ENCODE measurements at regions of chr4 and their contacts with region 1.

Region 1: GRCh38 chr4:118586357-118586790 is 98.8 kb upstream of the METTL14 start:
- DNase-seq: no peak
- ATAC-seq: no peak
- H3K4me3 ChIP-seq: no peak overlapping the region
- H3K4me3 Mint-ChIP-seq: no peak overlapping the region
- H3K27ac ChIP-seq: no peak overlapping the region
- H3K27ac Mint-ChIP-seq: no peak overlapping the region
- H3K4me1 ChIP-seq: peaks cover 7% of the 10 kb centered on the region
- H3K4me1 Mint-ChIP-seq: peaks cover 9% of the 10 kb centered on the region
- H3K27me3 ChIP-seq: peaks cover 0 to 4% of the 10 kb centered on the region in 2 experiments
- H3K27me3 Mint-ChIP-seq: peaks cover 24% of the 10 kb centered on the region
- CTCF ChIP-seq: no peak

Region 2: GRCh38 chr4:118296729-118297128 is 289.6 kb before region 1 on chr4:
- CTCF ChIA-PET with region 1: no interaction called
- POLR2A ChIA-PET with region 1: no interaction called
- intact Hi-C with region 1: no loop called
- DNase-seq: no peak
- ATAC-seq: no peak
- H3K4me3 ChIP-seq: no peak overlapping the region
- H3K4me3 Mint-ChIP-seq: no peak overlapping the region
- H3K27ac ChIP-seq: no peak overlapping the region
- H3K27ac Mint-ChIP-seq: no peak overlapping the region
- H3K4me1 ChIP-seq: no peaks in the 10 kb centered on the region
- H3K4me1 Mint-ChIP-seq: no peaks in the 10 kb centered on the region
- H3K27me3 ChIP-seq: no peaks in the 10 kb centered on the region
- H3K27me3 Mint-ChIP-seq: no peaks in the 10 kb centered on the region
- CTCF ChIP-seq: no peak

Region 3: DNA sequence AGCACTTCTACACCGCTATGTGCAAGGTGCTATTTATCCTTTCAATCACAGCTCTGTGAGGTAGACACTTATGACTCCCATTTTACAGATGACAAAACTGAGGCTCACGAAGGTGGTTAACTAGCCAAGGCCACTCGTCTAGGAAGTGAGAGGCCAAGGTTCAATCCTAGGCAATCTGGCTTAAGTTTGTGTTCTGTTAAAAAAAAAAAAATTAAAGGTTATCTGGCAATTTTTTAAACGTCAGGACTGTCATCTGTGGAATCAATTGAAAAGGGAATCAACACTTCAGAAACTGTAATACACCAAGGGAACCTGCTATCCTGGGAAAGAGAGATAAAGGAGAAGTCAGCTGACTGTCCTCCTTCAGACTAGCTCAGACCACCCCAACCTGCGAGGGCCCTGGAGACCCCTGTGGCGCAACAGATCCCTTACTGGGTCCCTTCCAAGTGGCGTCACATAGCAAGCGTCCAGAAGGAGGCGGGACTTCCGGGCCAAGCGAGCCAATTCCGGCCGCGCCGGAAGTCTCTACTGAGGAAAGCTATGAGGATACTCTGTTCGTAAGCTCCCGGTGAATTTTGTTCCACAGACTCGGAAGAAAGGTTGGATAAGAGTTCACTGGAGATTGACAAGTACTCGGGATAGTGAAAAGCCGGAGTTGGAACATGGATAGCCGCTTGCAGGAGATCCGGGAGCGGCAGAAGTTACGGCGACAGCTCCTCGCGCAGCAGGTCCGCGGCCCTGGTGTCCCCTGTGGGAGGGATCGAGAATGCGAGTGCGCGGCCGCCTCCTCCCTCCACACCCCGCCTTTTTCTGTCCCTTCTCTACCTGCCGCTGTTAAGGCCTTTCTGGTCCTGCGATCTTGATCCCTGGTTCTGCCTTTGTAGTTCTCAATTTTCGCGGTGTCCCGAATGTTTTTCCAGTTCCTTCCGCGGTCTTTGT is 98.8 kb after region 1 on chr4 and contains the start of gene METTL14:
- CTCF ChIA-PET with region 1: no interaction called
- POLR2A ChIA-PET with region 1: no interaction called
- intact Hi-C with region 1: loop called (anchors 1 kb)
- DNase-seq: peak; percentile 71 to 92 (median 85)
- ATAC-seq: peak; percentile 91
- H3K4me3 ChIP-seq: peak within 1 kb of the TSS; percentile 86 to 88
- H3K4me3 Mint-ChIP-seq: peak within 1 kb of the TSS; percentile 92
- H3K27ac ChIP-seq: peak within 1 kb of the TSS; percentile 84 to 94
- H3K27ac Mint-ChIP-seq: peak within 1 kb of the TSS; percentile 98
- H3K4me1 ChIP-seq: peaks cover 15% of the 10 kb centered on the region
- H3K4me1 Mint-ChIP-seq: peaks cover 35% of the 10 kb centered on the region
- H3K27me3 ChIP-seq: no peaks in the 10 kb centered on the region
- H3K27me3 Mint-ChIP-seq: no peaks in the 10 kb centered on the region
- CTCF ChIP-seq: no peak
- total RNA-seq, gene METTL14: 68.8 to 70.2 TPM

Region 4: DNA sequence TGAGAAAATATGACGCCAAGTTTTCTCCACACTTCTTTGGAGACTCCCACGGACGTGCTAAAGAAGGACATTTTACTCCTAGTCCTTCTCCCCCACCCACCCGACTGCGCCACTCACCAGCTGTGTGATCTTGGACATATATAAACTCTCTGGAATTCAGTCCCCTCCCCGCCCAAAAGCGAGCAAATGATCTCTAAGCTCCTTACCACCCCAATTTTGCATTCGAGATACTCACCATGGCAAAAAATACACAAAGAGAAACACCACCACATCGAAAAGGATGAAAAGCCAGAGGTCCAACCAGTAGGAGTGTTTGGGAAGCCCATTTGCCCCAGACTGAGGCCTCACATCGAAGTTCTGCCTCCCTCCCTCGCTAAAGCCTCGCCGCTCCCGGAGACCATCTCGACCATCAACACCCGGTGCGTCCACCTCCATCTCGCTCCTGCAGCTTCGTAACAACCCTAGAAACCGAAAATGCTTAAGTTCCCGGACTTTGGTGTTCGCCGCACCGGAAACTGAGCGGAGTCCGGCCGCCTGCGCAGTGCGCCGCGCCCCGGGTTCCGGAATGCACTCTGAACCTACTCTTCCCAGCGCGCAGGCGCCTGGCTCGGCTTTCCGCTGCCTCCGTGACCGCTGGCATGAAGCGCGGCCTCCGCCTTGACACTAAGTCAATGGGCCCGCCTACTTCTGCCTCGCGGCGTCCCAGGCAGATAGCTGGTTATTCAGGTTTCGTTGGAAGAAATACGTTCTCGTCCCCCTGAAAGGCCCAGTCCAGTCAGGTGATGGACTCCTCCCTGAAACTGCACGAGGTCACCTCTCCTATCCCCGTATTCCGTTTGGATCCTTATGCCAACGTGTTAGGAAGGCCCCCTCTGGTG is 714.0 kb after region 1 on chr4:
- CTCF ChIA-PET with region 1: no interaction called
- POLR2A ChIA-PET with region 1: no interaction called
- intact Hi-C with region 1: loop called in 1 of 2 experiments (anchors 5 kb)
- DNase-seq: peak; percentile 79 to 95 (median 89)
- ATAC-seq: peak; percentile 94
- H3K4me3 ChIP-seq: peak overlapping the region; percentile 92 to 97
- H3K4me3 Mint-ChIP-seq: peak overlapping the region; percentile 99
- H3K27ac ChIP-seq: peak overlapping the region; percentile 93 to 95
- H3K27ac Mint-ChIP-seq: peak overlapping the region; percentile 99
- H3K4me1 ChIP-seq: peaks cover 20% of the 10 kb centered on the region
- H3K4me1 Mint-ChIP-seq: peaks cover 35% of the 10 kb centered on the region
- H3K27me3 ChIP-seq: no peaks in the 10 kb centered on the region
- H3K27me3 Mint-ChIP-seq: no peaks in the 10 kb centered on the region
- CTCF ChIP-seq: no peak